ENCODE measurements at regions of chr6 and their contacts with region 1.

Region 1: GRCh38 chr6:31897612-31898382 is at the start of gene EHMT2:
- DNase-seq: peak; percentile 38
- ATAC-seq: peak; percentile 71
- H3K4me3 ChIP-seq: peak within 1 kb of the TSS; percentile 73 to 96
- H3K27ac ChIP-seq: peak within 1 kb of the TSS; percentile 91
- H3K4me1 ChIP-seq: peaks cover 21% of the 10 kb centered on the region
- H3K27me3 ChIP-seq: no peaks in the 10 kb centered on the region
- CTCF ChIP-seq: no peak
- total RNA-seq, gene EHMT2: 60.4 TPM

Region 2: GRCh38 chr6:31887173-31888007 is 10.4 kb before region 1 on chr6:
- CTCF ChIA-PET with region 1: interaction called, 4 read pairs
- POLR2A ChIA-PET with region 1: interaction called, 16 read pairs
- in situ Hi-C with region 1: no loop called
- intact Hi-C with region 1: no loop called
- DNase-seq: no peak
- ATAC-seq: no peak
- H3K4me3 ChIP-seq: no peak overlapping the region
- H3K27ac ChIP-seq: no peak overlapping the region
- H3K4me1 ChIP-seq: no peaks in the 10 kb centered on the region
- H3K27me3 ChIP-seq: no peaks in the 10 kb centered on the region
- CTCF ChIP-seq: no peak

Region 3: DNA sequence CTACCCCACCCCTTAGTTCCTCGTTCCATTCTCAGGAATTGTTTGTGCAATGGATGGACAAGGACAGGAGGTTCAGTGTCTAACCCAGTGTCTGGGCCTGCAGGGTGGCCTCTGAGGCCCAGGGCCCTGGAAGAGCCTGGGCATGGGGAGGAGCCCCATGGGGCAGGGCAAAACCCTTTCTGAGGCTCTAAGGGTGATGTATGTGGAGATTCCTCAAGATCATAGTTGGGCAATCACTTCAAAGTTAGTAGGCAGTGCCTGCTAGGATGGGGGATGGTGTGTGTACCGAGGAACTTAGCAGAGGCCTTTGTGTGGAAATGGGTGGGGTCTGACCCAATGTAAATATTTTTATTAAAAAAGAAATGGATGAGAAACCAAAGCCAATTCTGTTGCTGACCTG is 23.0 kb after region 1 on chr6:
- CTCF ChIA-PET with region 1: interaction called, 9 read pairs
- POLR2A ChIA-PET with region 1: interaction called, 14 read pairs
- in situ Hi-C with region 1: no loop called
- intact Hi-C with region 1: no loop called
- DNase-seq: no peak
- ATAC-seq: no peak
- H3K4me3 ChIP-seq: no peak overlapping the region
- H3K27ac ChIP-seq: no peak overlapping the region
- H3K4me1 ChIP-seq: no peaks in the 10 kb centered on the region
- H3K27me3 ChIP-seq: no peaks in the 10 kb centered on the region
- CTCF ChIP-seq: no peak